Esophagus muscularis mucosa (tissue), 4 donors: ENCODE measurements at regions of chr7 and their contacts with region 1.

Region 1: GRCh38 chr7:39580149-39580874 is 14.1 kb downstream of the YAE1 start:
- DNase-seq: no peak
- H3K4me3 ChIP-seq: no peak overlapping the region
- H3K27ac ChIP-seq: no peak overlapping the region
- H3K4me1 ChIP-seq: no peaks in the 10 kb centered on the region
- H3K27me3 ChIP-seq: no peaks in the 10 kb centered on the region
- CTCF ChIP-seq: peak; percentile 77 to 87 (median 84)
- EP300 ChIP-seq: no peak
- POLR2A ChIP-seq: no peak

Region 2: DNA sequence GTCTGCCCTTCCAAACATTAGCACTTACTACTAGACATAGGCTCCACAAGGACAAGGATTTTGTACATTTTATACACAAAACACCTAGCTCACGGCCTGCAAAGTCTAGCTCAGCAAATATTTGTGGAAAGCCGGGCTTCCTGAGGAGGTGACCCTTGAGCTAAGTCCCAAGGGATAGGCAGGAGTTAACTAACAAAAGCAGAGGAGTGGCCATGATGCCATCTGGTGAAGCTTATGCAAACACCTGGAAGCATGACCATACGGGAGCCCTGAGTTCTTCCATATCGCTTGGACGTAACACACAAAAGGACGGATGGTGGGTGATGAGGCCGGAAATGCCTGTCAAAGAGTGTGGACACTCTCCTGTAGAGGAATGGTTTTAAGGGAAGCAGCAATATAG is 40.0 kb before region 1 on chr7:
- intact Hi-C with region 1: no loop called
- DNase-seq: peak; percentile 62
- H3K4me3 ChIP-seq: no peak overlapping the region
- H3K27ac ChIP-seq: no peak overlapping the region
- H3K4me1 ChIP-seq: no peaks in the 10 kb centered on the region
- H3K27me3 ChIP-seq: no peaks in the 10 kb centered on the region
- CTCF ChIP-seq: no peak
- EP300 ChIP-seq: no peak
- POLR2A ChIP-seq: no peak

Region 3: GRCh38 chr7:39746103-39746819 is 165.9 kb after region 1 on chr7:
- intact Hi-C with region 1: loop called (anchors 1 kb)
- DNase-seq: no peak
- H3K4me3 ChIP-seq: no peak overlapping the region
- H3K27ac ChIP-seq: no peak overlapping the region
- H3K4me1 ChIP-seq: no peaks in the 10 kb centered on the region
- H3K27me3 ChIP-seq: no peaks in the 10 kb centered on the region
- CTCF ChIP-seq: peak; percentile 64 to 73 (median 72)
- EP300 ChIP-seq: no peak
- POLR2A ChIP-seq: no peak